ENCODE measurements at regions of chr6 and their contacts with region 1.

Region 1: DNA sequence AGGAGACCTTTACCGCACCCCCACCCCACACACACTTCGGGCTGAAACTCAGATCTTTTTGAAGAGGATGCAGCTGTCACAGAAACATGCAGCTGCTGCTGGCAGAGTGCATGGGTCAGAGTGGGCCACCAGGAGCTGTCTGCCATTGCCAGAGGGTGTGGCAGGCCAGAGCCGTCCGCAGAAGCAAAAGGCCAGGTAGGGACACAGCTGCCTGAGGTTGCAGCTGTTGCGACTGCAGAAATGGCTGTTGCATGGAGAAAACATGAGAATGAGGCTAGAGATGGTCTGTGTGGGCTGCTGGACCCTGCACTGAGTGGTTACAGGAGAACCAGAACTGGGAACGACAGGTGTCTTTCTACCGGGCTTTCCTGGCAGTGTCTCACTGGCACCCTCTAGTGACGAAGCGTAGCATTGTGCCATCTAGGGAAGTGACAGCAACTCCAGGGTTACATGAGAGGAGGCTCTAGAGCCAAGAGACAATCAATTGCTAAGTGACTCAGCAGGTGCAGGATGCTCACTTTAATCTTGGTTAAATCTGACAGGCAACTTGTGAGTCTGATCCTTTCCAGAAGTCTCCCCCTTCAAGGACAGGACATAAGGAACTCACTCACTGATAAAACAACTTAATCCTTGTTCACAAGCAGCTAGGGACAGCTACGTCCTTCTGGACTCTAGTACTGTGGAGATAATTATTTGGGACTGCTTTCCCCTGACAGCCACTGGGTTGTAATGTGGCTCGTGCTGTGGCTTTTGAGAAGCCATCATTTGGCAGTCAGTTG is 29.1 kb upstream of the SERPINB9 start:
- DNase-seq: peak; percentile 78 to 96
- H3K4me3 ChIP-seq: no peak overlapping the region
- H3K27ac ChIP-seq: no peak overlapping the region
- H3K4me1 ChIP-seq: peaks cover 15 to 28% (median 19%) of the 10 kb centered on the region in 4 experiments
- H3K27me3 ChIP-seq: no peaks in the 10 kb centered on the region
- CTCF ChIP-seq: peak; percentile 89 to 100 (median 92)
- EP300 ChIP-seq: no peak
- POLR2A ChIP-seq: no peak
- RAD21 ChIP-seq: peak; percentile 93

Region 2: DNA sequence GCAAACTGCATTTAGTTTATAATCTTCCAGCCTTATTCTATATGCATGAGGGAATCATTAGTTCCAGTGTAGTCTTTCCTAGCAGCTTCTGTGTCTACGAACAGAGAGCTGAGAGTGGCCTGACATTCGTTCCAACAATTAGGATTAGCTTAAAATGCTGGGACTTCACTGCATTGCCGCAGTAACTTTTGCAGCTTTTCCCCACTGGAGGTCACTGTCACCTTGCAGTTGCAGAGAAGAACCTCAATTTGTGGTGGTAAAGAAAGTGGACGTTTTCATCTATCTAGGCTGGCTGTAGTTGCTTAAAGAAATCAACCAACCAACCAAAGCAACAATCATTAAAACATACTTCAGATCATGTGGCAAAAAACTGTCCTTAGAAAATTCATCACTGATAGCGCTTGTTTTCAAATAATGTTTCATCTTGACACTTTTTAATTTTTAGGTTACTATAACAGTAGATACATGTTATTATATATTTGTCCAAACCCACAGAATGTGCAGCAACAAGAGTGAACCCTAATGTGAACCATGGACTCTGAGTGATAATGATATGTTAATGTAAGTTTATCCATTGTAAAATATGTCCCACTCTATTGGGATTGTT is 193.7 kb before region 1 on chr6:
- CTCF ChIA-PET with region 1: interaction called, 13 read pairs
- POLR2A ChIA-PET with region 1: no interaction called
- DNase-seq: peak in 1 of 2 experiments; percentile 64
- H3K4me3 ChIP-seq: no peak overlapping the region
- H3K27ac ChIP-seq: no peak overlapping the region
- H3K4me1 ChIP-seq: peaks cover 3 to 20% (median 6%) of the 10 kb centered on the region in 4 experiments
- H3K27me3 ChIP-seq: no peaks in the 10 kb centered on the region
- CTCF ChIP-seq: peak; percentile 61 to 93 (median 89)
- EP300 ChIP-seq: no peak
- POLR2A ChIP-seq: no peak
- RAD21 ChIP-seq: peak; percentile 93 to 96

Region 3: DNA sequence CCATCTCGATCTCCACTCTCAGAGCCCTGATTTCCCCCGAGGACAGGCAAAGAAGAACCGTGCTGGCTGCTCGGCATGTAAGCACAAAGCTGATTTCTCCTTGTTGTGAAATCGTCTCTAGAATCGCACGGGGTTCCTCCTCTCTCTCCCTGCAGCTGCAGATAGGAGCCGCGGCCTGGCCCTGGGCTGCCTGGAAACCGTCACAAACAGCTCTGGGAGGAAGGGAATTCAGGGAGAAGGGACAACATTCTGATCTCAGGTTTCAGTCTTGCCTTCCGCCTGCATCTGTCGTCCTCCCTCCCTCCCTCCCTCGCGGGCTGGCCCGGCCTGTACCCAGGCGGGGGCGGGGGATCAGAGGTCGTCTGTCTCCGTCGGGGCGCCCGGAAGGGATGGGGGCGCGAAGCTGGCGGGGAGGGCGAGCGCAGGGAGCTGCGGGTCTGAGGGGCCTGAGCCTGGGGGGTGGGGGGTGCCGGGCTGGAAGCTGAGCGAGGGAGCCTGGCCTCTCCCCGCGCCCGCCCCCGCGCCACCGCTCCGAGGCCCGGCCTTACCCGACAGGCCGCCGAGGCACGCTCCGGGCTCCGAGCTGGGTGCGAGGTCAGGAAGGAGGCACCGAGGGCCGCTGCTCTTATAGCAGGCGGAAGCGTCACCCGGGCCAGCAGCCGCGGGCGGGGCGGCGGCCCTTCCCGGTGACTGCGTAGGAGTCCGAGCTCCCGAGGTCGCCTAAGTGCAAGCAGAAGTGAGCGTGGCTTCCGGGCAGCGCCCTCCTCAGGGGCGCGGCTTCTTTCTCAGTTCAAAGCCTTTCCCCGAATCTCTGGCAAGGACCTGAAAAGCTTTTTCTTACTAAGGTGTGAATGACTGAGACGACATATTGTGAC is 90.7 kb before region 1 on chr6 and contains the start of gene SERPINB1:
- CTCF ChIA-PET with region 1: interaction called, 129 read pairs
- POLR2A ChIA-PET with region 1: interaction called, 16 read pairs
- DNase-seq: peak; percentile 69 to 83
- H3K4me3 ChIP-seq: peak within 1 kb of the TSS; percentile 21 to 62 (median 53)
- H3K27ac ChIP-seq: peak within 1 kb of the TSS; percentile 87
- H3K4me1 ChIP-seq: peaks cover 8 to 17% (median 10%) of the 10 kb centered on the region in 4 experiments
- H3K27me3 ChIP-seq: no peaks in the 10 kb centered on the region
- CTCF ChIP-seq: peak in 2 of 3 experiments; percentile 5 to 17; a peak in 2 of 4 replicates
- EP300 ChIP-seq: peak in 1 of 2 experiments; percentile 34; a peak in 1 of 3 replicates
- POLR2A ChIP-seq: peak; percentile 59 to 79
- RAD21 ChIP-seq: peak in 1 of 2 experiments; percentile 19; a peak in 1 of 4 replicates
- total RNA-seq, gene SERPINB1: 17.3 and 20.0 TPM in 2 replicates

Region 4: DNA sequence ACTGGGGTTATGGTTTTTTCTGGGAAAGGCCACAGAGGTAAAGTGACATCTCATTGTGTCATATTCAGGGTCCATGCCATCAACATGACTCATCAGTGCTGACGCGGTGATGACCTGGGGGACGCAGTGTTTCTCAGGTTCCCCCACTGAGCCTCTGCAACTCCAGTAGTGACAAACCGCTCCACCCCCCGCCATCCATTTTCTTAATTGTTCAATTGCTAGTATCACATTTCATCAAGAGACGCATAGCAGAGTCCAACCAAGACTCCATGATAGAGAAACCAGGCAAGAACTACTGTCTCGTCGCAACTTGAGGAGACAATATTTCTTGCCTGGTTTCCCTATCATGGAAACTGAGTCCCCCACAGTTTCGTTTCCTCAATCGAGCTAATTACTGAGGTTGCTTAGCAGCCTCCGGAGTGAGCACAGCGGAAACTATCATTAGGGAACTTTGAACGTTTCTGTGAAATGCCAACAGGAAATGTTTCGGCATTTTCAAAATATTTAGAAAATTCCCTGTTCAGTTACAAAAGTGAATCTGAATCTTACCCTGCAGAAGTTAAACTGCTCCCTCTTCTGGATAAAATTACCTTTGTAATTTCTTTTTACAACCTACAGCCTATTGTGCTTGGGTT is 78.3 kb before region 1 on chr6:
- CTCF ChIA-PET with region 1: interaction called, 129 read pairs
- POLR2A ChIA-PET with region 1: interaction called, 3 read pairs
- DNase-seq: no peak
- H3K4me3 ChIP-seq: peak overlapping the region in 2 of 4 experiments; percentile 4 to 30; a peak in 3 of 8 replicates
- H3K27ac ChIP-seq: 0 out of 2 replicates have a peak overlapping the region, but pooled peaks have one; percentile 13
- H3K4me1 ChIP-seq: peaks cover 3 to 20% (median 9%) of the 10 kb centered on the region in 4 experiments
- H3K27me3 ChIP-seq: no peaks in the 10 kb centered on the region
- CTCF ChIP-seq: no peak
- EP300 ChIP-seq: no peak
- POLR2A ChIP-seq: no peak
- RAD21 ChIP-seq: no peak

Region 5: GRCh38 chr6:2876210-2877056 is 55.7 kb before region 1 on chr6:
- CTCF ChIA-PET with region 1: interaction called, 10 read pairs
- POLR2A ChIA-PET with region 1: interaction called, 19 read pairs
- DNase-seq: no peak
- H3K4me3 ChIP-seq: peak overlapping the region; percentile 25 to 83 (median 47); a peak in 6 of 8 replicates
- H3K27ac ChIP-seq: no peak overlapping the region; the same call in 1 of the 2 replicates
- H3K4me1 ChIP-seq: peaks cover 15 to 25% (median 18%) of the 10 kb centered on the region in 4 experiments
- H3K27me3 ChIP-seq: peaks cover 0 to 7% (median 6%) of the 10 kb centered on the region in 4 experiments; a peak in 3 of 7 replicates
- CTCF ChIP-seq: no peak
- EP300 ChIP-seq: no peak
- POLR2A ChIP-seq: no peak
- RAD21 ChIP-seq: no peak

Region 6: DNA sequence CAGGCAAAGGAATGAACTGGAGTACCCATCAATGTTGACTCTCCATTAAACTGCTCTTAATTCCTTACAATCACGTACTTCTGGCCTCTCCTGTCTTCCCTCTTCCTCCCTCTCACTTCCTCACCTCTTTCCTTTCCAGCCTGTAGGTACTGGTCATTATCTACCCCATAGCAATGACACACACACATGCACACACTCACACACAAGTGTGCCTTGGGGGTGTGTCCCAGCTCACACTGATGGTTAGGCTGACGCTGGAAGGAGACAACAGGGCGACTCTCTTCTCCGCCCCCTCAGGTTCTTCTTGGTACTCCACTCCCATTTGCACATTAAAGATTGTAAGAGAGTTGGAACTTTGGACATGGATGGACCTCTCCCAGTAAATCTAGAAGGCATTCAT is 15.1 kb before region 1 on chr6:
- CTCF ChIA-PET with region 1: interaction called, 64 read pairs
- POLR2A ChIA-PET with region 1: interaction called, 13 read pairs
- DNase-seq: peak in 1 of 2 experiments; percentile 46
- H3K4me3 ChIP-seq: no peak overlapping the region
- H3K27ac ChIP-seq: peak overlapping the region; percentile 43; the same call in 1 of the 2 replicates
- H3K4me1 ChIP-seq: peaks cover 9 to 32% (median 23%) of the 10 kb centered on the region in 4 experiments
- H3K27me3 ChIP-seq: no peaks in the 10 kb centered on the region
- CTCF ChIP-seq: peak in 2 of 3 experiments; percentile 32 to 42; a peak in 3 of 4 replicates
- EP300 ChIP-seq: no peak
- POLR2A ChIP-seq: no peak
- RAD21 ChIP-seq: peak in 1 of 2 experiments; percentile 26; a peak in 2 of 4 replicates

Region 7: GRCh38 chr6:2964793-2965505 is 32.8 kb after region 1 on chr6:
- CTCF ChIA-PET with region 1: no interaction called
- POLR2A ChIA-PET with region 1: no interaction called
- DNase-seq: no peak
- H3K4me3 ChIP-seq: no peak overlapping the region
- H3K27ac ChIP-seq: no peak overlapping the region
- H3K4me1 ChIP-seq: peaks cover 12 to 16% (median 15%) of the 10 kb centered on the region in 4 experiments
- H3K27me3 ChIP-seq: no peaks in the 10 kb centered on the region
- CTCF ChIP-seq: no peak
- EP300 ChIP-seq: no peak
- POLR2A ChIP-seq: no peak
- RAD21 ChIP-seq: no peak

Region 8: DNA sequence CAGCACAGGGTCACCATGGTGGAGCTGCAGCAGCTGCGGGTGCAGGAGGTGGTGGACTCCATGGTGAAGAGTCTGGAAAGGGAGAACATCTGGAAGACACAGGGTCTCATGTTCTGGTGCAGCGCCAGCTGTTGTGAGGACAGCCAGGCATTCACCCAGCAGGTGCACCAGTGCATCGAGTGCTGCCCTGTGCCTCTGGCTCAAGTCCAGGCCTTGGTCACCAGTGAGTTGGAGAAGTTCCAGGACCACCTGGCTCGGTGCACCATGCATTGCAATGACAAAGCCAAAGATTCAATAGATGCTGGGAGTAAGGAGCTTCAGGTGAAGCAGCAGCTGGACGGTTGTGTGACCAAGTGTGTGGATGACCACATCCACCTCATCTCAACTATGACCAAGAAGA is 113.2 kb after region 1 on chr6:
- CTCF ChIA-PET with region 1: no interaction called
- POLR2A ChIA-PET with region 1: no interaction called
- DNase-seq: no peak
- H3K4me3 ChIP-seq: no peak overlapping the region
- H3K27ac ChIP-seq: no peak overlapping the region
- H3K4me1 ChIP-seq: peaks cover 0 to 5% (median 1%) of the 10 kb centered on the region in 4 experiments; a peak in 1 of 7 replicates
- H3K27me3 ChIP-seq: no peaks in the 10 kb centered on the region
- CTCF ChIP-seq: no peak
- EP300 ChIP-seq: no peak
- POLR2A ChIP-seq: no peak
- RAD21 ChIP-seq: no peak